Left ventricle myocardium superior (tissue), 1 donor: ENCODE measurements at regions of chr9 and their contacts with region 1.

Region 1: DNA sequence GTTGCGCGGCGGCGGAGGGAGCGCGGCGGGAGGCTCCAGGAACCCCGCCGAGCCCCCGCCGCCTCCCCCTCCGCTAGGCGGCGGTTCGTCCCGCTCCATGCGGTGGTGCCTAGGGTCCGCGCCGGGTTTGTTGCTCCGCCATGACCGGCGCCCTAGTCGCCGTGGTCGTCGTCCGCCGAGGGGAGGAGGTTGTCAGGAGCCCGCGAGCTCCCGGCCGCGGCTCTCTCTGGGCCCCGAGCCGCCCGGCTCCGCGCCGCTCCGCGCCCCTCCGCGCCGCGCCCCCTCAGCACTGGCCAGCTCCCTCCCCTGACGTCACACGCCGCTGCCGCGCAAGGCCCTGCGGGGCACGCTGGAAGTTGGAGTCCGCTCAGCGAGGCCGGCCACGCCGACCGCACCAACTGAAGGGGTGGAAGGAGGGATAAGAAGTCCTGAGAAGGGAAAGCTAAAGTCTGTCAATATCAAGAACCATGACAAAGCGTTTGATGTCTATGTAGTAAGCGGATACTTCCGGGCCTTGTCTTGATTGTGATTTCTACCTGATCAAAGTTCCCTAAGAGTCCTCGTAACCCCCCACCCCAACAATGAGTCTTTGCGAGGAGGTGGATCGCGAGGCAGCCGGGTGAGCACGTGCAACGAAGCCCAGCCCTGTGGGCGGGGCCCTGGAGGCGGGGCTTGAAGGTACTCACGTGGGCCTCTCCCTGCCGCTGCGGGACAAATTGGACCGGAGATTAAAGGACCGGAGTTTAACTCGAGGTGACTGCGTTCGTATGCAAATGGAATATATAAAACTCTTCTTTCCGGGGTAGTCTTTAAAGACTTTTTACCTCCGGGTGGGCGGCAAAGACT is at the start of gene NR6A1:
- DNase-seq: peak; percentile 98
- ATAC-seq: peak; percentile 93
- total RNA-seq, gene NR6A1: 1.9 TPM

Region 2: GRCh38 chr9:124658165-124659017 is 112.9 kb before region 1 on chr9:
- intact Hi-C with region 1: no loop called
- DNase-seq: peak; percentile 58
- ATAC-seq: peak; percentile 96

Region 3: GRCh38 chr9:124835026-124835557 is 63.8 kb after region 1 on chr9:
- intact Hi-C with region 1: no loop called
- DNase-seq: peak; percentile 93
- ATAC-seq: peak; percentile 58

Region 4: GRCh38 chr9:124852829-124853531 is 81.7 kb after region 1 on chr9 and contains the start of gene WDR38:
- intact Hi-C with region 1: loop called (anchors 5 kb)
- DNase-seq: peak; percentile 92
- ATAC-seq: peak; percentile 90
- total RNA-seq, gene WDR38: not detected

Region 5: GRCh38 chr9:125143375-125144090 is 372.3 kb after region 1 on chr9 and contains the start of gene SCAI:
- intact Hi-C with region 1: loop called (anchors 10 kb)
- DNase-seq: peak; percentile 99
- ATAC-seq: peak; percentile 100
- total RNA-seq, gene SCAI: 3.8 TPM